Spleen (tissue), 13 donors: ENCODE measurements at regions of chr9 and their contacts with region 1.

Region 1: DNA sequence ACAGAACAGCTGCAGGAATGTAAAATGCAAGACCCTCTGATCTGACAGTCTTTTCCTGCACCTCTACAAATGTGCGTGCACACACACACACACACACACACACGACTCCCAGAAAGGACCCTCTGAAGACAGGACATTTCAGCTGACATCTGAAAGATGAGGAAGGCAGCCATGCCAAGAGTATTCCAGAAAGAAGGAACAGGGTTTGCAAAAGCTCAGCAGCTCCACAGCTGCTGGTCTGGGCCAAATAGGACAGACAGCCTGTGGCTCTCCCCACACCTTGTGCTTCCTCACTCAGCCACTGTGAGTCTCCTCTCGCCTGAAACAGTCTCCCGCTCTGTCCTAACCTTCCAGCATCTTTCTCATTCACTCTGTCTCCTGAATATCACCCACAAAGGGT is 189.0 kb downstream of the PALM2AKAP2 start:
- DNase-seq: no peak
- H3K4me3 ChIP-seq: no peak overlapping the region
- H3K27ac ChIP-seq: peak overlapping the region; percentile 74 to 88 (median 86)
- H3K4me1 ChIP-seq: peaks cover 52 to 84% (median 77%) of the 10 kb centered on the region in 6 donors
- H3K27me3 ChIP-seq: no peaks in the 10 kb centered on the region
- CTCF ChIP-seq: peak in 2 of 11 experiments; percentile 9 to 41
- POLR2A ChIP-seq: no peak

Region 2: GRCh38 chr9:109918339-109919163 is 50.5 kb before region 1 on chr9:
- intact Hi-C with region 1: loop called (anchors 5 kb)
- DNase-seq: no peak
- H3K4me3 ChIP-seq: peak overlapping the region in 1 of 8 donors; percentile 26
- H3K27ac ChIP-seq: peak overlapping the region; percentile 60 to 86 (median 79)
- H3K4me1 ChIP-seq: peaks cover 0 to 82% (median 30%) of the 10 kb centered on the region in 6 donors
- H3K27me3 ChIP-seq: no peaks in the 10 kb centered on the region
- CTCF ChIP-seq: no peak
- POLR2A ChIP-seq: no peak

Region 3: DNA sequence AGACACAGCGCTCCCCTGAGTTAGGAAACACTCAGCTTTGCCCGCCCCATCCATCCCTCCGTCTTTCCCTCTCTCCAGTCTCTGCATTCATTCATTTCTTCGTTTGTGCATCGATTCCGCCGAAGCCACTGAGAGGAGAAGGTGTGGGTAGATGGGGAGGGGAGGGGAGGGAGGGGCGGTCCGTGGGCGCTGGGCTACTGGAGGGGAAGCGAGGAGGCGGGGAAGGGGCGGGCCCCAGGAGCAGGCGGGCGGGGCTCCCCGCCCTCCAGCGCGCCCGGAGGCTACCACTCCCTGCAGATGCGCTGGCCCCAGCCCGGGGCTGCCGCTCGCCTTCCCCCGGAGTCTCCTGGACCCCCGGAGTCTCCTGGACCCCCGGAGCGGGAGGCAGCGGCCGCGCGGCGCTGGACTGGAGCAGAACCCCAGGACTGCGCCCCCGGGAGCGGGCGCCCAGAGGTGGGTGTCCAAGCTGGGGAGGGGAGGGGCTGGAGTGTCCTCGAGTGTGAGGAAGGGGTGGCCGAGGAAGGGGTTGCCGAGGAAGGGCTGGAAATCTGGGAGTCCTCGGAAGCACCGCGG is 79.5 kb after region 1 on chr9:
- intact Hi-C with region 1: loop called (anchors 10 kb)
- DNase-seq: peak; percentile 96
- H3K4me3 ChIP-seq: peak overlapping the region; percentile 54 to 95 (median 88)
- H3K27ac ChIP-seq: peak overlapping the region; percentile 75 to 93 (median 88)
- H3K4me1 ChIP-seq: peaks cover 10 to 69% (median 48%) of the 10 kb centered on the region in 6 donors
- H3K27me3 ChIP-seq: peaks cover 0 to 26% (median 0%) of the 10 kb centered on the region in 7 donors
- CTCF ChIP-seq: no peak
- POLR2A ChIP-seq: peak in 2 of 3 donors; percentile 49 to 93